CD14-positive monocyte (primary cell): ENCODE measurements at regions of chrX and their contacts with region 1.

Region 1: GRCh38 chrX:74232859-74233258 is 71.1 kb upstream of the ZCCHC13 start:
- DNase-seq: no peak
- H3K4me3 ChIP-seq: no peak overlapping the region
- H3K4me3 Mint-ChIP-seq: no peak overlapping the region
- H3K27ac ChIP-seq: no peak overlapping the region
- H3K27ac Mint-ChIP-seq: no peak overlapping the region
- H3K4me1 ChIP-seq: no peaks in the 10 kb centered on the region
- H3K4me1 Mint-ChIP-seq: no peaks in the 10 kb centered on the region
- H3K27me3 ChIP-seq: no peaks in the 10 kb centered on the region
- H3K27me3 Mint-ChIP-seq: no peaks in the 10 kb centered on the region
- CTCF ChIP-seq: no peak

Region 2: DNA sequence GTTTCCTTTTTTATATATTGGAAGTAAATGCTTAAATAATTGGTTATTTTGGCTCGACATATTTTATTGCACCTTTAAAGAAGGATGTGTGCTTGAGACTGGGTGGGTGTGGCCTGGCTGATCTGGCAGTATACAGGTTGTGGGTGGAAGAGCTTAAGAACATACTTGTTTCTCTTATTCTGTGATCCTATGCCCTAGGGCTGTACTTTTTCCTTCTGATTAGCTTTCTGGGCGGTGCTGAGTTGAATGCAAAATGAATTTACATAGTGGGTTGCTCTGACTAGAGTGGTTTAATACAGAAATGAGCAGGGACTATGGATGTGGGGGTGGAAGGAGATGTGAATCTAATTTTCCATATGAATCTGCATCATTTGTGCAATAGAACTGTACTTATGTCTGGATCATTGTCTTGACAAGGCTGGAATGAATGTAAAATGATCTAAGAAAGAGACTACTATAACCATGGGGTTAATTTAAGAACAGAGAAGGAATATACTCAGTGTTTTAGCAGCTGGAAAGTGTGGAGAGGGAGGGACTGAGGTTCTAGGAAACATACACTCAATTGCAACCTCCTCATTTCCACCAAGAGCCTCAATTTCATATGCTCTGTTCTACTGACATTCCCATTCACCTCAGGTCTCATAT is 307.9 kb after region 1 on chrX:
- intact Hi-C with region 1: loop called in 1 of 2 experiments (anchors 10 kb)
- DNase-seq: no peak
- H3K4me3 ChIP-seq: no peak overlapping the region
- H3K4me3 Mint-ChIP-seq: no peak overlapping the region
- H3K27ac ChIP-seq: no peak overlapping the region
- H3K27ac Mint-ChIP-seq: no peak overlapping the region
- H3K4me1 ChIP-seq: peaks cover 6 to 13% of the 10 kb centered on the region in 2 donors
- H3K4me1 Mint-ChIP-seq: peaks cover 10% of the 10 kb centered on the region
- H3K27me3 ChIP-seq: no peaks in the 10 kb centered on the region
- H3K27me3 Mint-ChIP-seq: peaks cover 3 to 9% (median 4%) of the 10 kb centered on the region in 3 donors
- CTCF ChIP-seq: no peak